ENCODE measurements at regions of chr4 and their contacts with region 1.

Region 1: GRCh38 chr4:56977321-56978012 is at the start of gene NOA1:
- DNase-seq: peak; percentile 99
- H3K4me3 Mint-ChIP-seq: peak within 1 kb of the TSS; percentile 99
- H3K27ac Mint-ChIP-seq: peak within 1 kb of the TSS; percentile 98
- H3K4me1 Mint-ChIP-seq: peaks cover 57% of the 10 kb centered on the region
- H3K27me3 Mint-ChIP-seq: no peaks in the 10 kb centered on the region
- total RNA-seq, gene NOA1: 22.1 to 22.6 TPM

Region 2: DNA sequence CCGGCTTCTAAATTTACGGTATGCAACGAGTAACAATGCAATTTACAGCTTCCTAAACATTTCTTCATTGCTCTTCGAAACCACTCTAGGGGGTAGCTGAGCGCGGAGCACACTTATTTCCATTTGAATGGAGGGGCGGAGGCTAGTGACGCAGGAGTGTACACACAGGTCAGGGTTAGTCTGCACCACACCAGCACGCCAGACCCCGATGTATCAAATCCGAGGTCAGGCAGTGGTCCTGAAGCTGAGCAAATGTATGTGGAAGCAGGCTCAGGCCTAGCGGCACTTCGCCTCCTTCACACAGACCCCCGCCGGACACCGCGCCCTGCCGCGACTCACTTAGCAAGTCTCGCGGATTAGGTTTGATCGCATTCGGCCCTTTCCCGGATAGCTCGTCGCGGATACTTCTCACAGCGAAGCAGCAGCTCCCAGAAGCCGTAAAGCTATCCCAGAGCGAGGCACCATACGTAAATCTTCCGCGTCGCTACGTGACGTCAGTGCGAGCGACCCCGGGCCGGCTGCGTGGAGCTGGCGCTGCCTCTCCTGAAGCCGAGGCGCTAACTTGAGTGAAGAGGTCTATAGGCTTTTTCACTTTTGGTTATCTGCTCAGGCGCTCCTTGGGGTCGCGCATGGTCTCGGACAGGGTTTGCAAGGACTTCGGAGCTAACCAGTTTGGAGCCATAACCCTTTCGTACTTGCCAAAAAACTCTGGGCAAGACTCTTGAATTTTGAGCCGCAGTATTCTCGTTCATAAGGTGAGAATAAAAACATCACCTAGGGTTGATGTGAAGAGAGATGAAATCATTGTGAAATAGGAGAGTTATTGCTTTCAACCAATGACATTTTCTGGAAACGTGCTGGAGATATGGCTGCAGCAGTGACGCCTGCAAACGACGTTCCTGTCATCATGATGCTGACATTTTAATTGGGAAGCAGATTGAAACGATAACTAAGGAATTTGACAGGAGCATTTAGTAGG is 590.2 kb before region 1 on chr4 and contains the start of gene AASDH:
- CTCF ChIA-PET with region 1: interaction called, 3 read pairs
- POLR2A ChIA-PET with region 1: interaction called, 34 read pairs
- DNase-seq: peak; percentile 96
- H3K4me3 Mint-ChIP-seq: peak within 1 kb of the TSS; percentile 87
- H3K27ac Mint-ChIP-seq: peak within 1 kb of the TSS; percentile 98
- H3K4me1 Mint-ChIP-seq: peaks cover 38% of the 10 kb centered on the region
- H3K27me3 Mint-ChIP-seq: no peaks in the 10 kb centered on the region
- total RNA-seq, gene AASDH: 9.6 to 11.1 TPM

Region 3: GRCh38 chr4:56655209-56655626 is 322.2 kb before region 1 on chr4:
- CTCF ChIA-PET with region 1: no interaction called
- POLR2A ChIA-PET with region 1: interaction called, 14 read pairs
- DNase-seq: no peak
- H3K4me3 Mint-ChIP-seq: peak overlapping the region; percentile 81
- H3K27ac Mint-ChIP-seq: peak overlapping the region; percentile 84
- H3K4me1 Mint-ChIP-seq: peaks cover 63% of the 10 kb centered on the region
- H3K27me3 Mint-ChIP-seq: peaks cover 18% of the 10 kb centered on the region

Region 4: GRCh38 chr4:56698329-56698728 is 279.1 kb before region 1 on chr4:
- CTCF ChIA-PET with region 1: no interaction called
- POLR2A ChIA-PET with region 1: no interaction called
- DNase-seq: no peak
- H3K4me3 Mint-ChIP-seq: no peak overlapping the region
- H3K27ac Mint-ChIP-seq: no peak overlapping the region
- H3K4me1 Mint-ChIP-seq: peaks cover 15% of the 10 kb centered on the region
- H3K27me3 Mint-ChIP-seq: peaks cover 13% of the 10 kb centered on the region

Region 5: GRCh38 chr4:56850910-56851309 is 126.6 kb before region 1 on chr4:
- CTCF ChIA-PET with region 1: no interaction called
- POLR2A ChIA-PET with region 1: no interaction called
- DNase-seq: no peak
- H3K4me3 Mint-ChIP-seq: no peak overlapping the region
- H3K27ac Mint-ChIP-seq: no peak overlapping the region
- H3K4me1 Mint-ChIP-seq: no peaks in the 10 kb centered on the region
- H3K27me3 Mint-ChIP-seq: peaks cover 2% of the 10 kb centered on the region

Region 6: GRCh38 chr4:56959100-56959499 is 18.4 kb before region 1 on chr4:
- CTCF ChIA-PET with region 1: interaction called, 17 read pairs
- POLR2A ChIA-PET with region 1: interaction called, 12 read pairs
- DNase-seq: no peak
- H3K4me3 Mint-ChIP-seq: no peak overlapping the region
- H3K27ac Mint-ChIP-seq: no peak overlapping the region
- H3K4me1 Mint-ChIP-seq: no peaks in the 10 kb centered on the region
- H3K27me3 Mint-ChIP-seq: no peaks in the 10 kb centered on the region

Region 7: GRCh38 chr4:57445686-57446085 is 468.2 kb after region 1 on chr4:
- CTCF ChIA-PET with region 1: no interaction called
- POLR2A ChIA-PET with region 1: no interaction called
- DNase-seq: no peak
- H3K4me3 Mint-ChIP-seq: no peak overlapping the region
- H3K27ac Mint-ChIP-seq: no peak overlapping the region
- H3K4me1 Mint-ChIP-seq: no peaks in the 10 kb centered on the region
- H3K27me3 Mint-ChIP-seq: no peaks in the 10 kb centered on the region

Measured in activated CD4-positive, alpha-beta memory T cell treated with anti-CD3 and anti-CD28 coated beads, Interleukin-2, amount 10 ng/mL, durations not matched to agents 7 days and 5 days (primary cell).